Psoas muscle (tissue), 8 donors: ENCODE measurements at regions of chr15 and their contacts with region 1.

Region 1: DNA sequence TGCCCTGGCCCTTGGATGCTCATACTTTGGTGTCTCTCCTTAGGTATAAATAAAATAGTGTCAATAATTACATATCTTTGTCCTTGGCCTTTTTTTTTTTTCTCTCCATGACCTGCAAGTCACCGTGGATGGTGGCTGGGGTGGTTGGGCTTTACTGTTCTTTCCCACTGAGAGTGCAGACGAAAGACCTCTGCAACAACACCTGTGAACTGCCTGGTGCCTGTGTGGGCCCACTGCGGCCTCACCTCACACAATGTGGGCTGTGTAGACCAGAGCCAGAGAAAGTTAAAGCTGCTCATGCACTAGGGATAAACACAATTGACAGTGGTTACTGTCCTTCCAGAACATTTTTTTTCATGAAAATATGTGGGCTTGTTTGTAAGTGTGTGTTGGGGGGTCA is 39.0 kb downstream of the CCDC32 start:
- DNase-seq: no peak
- ATAC-seq: no peak
- H3K4me3 ChIP-seq: no peak overlapping the region
- H3K27ac ChIP-seq: no peak overlapping the region
- H3K4me1 ChIP-seq: no peaks in the 10 kb centered on the region
- H3K27me3 ChIP-seq: no peaks in the 10 kb centered on the region
- CTCF ChIP-seq: no peak

Region 2: DNA sequence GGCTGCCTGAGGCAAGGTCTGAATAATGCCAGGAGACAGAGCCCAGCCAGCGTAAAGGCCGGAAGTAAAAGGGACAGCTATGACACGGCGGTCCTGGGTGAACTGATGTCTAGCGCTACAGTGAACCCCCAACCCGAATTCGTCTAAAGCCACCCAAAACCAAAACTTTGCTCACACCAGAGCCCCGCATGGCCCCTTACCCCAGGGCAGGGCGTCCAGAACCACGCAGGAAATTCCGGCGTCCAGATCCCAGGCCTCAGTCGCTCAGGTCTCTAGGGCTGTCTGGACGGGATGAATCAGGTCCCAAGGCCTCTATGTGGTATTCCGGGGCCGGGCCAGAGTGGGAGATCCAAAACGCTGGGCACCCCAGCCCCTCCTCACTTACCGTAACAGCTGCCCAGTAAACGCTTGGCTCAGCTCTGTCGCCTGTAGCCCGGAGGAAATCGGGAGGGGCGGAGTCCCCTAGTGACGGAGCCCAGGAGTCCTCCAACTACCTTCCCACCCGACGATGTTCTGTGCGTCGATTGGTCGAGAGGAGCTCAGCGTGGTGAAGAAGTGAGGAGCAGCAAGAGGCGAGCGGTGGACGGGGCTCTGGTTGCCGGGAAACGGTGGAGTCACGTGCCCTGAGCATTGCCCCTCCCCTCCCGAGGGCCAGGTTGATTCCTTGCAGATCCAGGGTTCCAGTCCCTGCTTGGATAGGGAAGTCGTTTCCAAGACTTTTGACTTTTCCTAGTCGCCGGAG is 38.9 kb after region 1 on chr15 and contains the start of gene CCDC32:
- intact Hi-C with region 1: loop called in 1 of 2 experiments (anchors 5 kb)
- DNase-seq: peak; percentile 96 to 98
- ATAC-seq: peak; percentile 93 to 97 (median 95)
- H3K4me3 ChIP-seq: peak within 1 kb of the TSS; percentile 89
- H3K27ac ChIP-seq: peak within 1 kb of the TSS; percentile 98
- H3K4me1 ChIP-seq: peaks cover 30% of the 10 kb centered on the region
- H3K27me3 ChIP-seq: no peaks in the 10 kb centered on the region
- CTCF ChIP-seq: no peak
- total RNA-seq, gene CCDC32: 9.3 to 23.6 (median 19.8) TPM

Region 3: GRCh38 chr15:40593588-40594428 is 68.0 kb after region 1 on chr15 and contains the start of gene KNL1:
- intact Hi-C with region 1: loop called in 1 of 2 experiments (anchors 10 kb)
- DNase-seq: peak; percentile 84 to 92
- ATAC-seq: peak; percentile 92 to 96 (median 94)
- H3K4me3 ChIP-seq: peak within 1 kb of the TSS; percentile 73
- H3K27ac ChIP-seq: peak within 1 kb of the TSS; percentile 91
- H3K4me1 ChIP-seq: no peaks in the 10 kb centered on the region
- H3K27me3 ChIP-seq: peaks cover 0 to 4% (median 0%) of the 10 kb centered on the region in 3 donors
- CTCF ChIP-seq: no peak
- total RNA-seq, gene KNL1: 0.04 to 0.50 (median 0.49) TPM in 3 of 4 donors, not detected in the other

Region 4: DNA sequence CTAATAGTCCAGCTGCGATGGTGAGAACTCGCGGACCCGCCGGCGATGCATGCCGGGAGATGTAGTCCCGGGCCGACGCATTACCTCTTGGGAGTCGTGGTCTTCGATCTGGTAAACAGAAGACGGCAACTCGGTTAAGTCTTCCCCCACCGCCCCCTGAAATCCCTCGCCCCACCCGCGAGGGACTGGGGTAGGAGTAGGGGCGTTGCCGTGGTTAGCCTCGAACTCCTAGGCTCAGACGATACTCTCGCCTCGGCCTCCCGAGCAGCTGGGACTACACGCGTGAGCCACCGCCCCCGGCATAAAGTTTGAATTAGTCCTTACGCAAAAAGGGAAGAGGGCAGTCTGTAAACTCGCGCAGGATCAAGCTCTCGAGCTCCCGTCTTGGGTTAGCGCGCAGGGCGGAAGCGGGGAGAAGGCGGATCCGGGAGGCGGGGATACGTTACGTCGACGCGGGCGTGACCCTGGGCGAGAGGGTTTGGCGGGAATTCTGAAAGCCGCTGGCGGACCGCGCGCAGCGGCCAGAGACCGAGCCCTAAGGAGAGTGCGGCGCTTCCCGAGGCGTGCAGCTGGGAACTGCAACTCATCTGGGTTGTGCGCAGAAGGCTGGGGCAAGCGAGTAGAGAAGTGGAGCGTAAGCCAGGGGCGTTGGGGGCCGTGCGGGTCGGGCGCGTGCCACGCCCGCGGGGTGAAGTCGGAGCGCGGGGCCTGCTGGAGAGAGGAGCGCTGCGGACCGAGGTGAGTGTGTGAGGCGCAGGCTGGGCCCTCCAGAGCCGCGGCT is 169.0 kb after region 1 on chr15 and contains the start of gene RAD51:
- intact Hi-C with region 1: loop called in 1 of 2 experiments (anchors 10 kb)
- DNase-seq: peak; percentile 92 to 97
- ATAC-seq: peak; percentile 97 to 99 (median 98)
- H3K4me3 ChIP-seq: peak within 1 kb of the TSS; percentile 85
- H3K27ac ChIP-seq: peak within 1 kb of the TSS; percentile 98
- H3K4me1 ChIP-seq: peaks cover 15% of the 10 kb centered on the region
- H3K27me3 ChIP-seq: no peaks in the 10 kb centered on the region
- CTCF ChIP-seq: no peak
- total RNA-seq, gene RAD51: 0.41 to 1.5 (median 0.56) TPM